PC-9 (cell line): ENCODE measurements at regions of chr19 and their contacts with region 1.

Region 1: GRCh38 chr19:5827891-5828660 is 11.4 kb downstream of the FUT6 start:
- DNase-seq: peak; percentile 75 to 94
- H3K4me3 ChIP-seq: peak overlapping the region; percentile 85
- H3K27ac ChIP-seq: peak overlapping the region; percentile 58
- H3K4me1 ChIP-seq: 0 out of 2 replicates have a peak, but pooled peaks cover 9% of the 10 kb centered on the region
- H3K27me3 ChIP-seq: no peaks in the 10 kb centered on the region
- CTCF ChIP-seq: no peak

Region 2: DNA sequence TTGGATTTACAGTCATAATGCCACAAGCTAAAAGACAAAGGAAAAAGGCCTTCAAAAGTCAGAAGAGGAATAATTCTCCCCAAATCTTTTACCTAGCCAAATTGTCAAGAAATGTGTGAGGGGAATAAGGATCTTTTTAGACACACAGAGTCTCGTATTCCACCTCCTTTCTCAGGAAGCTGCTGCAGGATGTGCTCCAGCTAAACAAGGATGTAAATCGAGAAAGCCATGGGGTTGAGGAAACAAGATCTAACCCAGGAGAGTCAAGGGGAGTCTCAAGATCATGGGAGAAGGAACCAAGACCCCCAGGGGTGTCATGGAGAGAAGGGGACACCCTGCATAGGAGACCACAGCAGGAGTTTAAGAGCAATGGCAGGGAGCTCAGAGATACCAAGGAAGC is 711.8 kb before region 1 on chr19:
- CTCF ChIA-PET with region 1: no interaction called
- POLR2A ChIA-PET with region 1: interaction called, 25 read pairs
- intact Hi-C with region 1: no loop called
- DNase-seq: no peak
- H3K4me3 ChIP-seq: no peak overlapping the region
- H3K27ac ChIP-seq: no peak overlapping the region
- H3K4me1 ChIP-seq: no peaks in the 10 kb centered on the region
- H3K27me3 ChIP-seq: no peaks in the 10 kb centered on the region
- CTCF ChIP-seq: no peak

Region 3: GRCh38 chr19:5615756-5616332 is 212.2 kb before region 1 on chr19:
- CTCF ChIA-PET with region 1: no interaction called
- POLR2A ChIA-PET with region 1: no interaction called
- intact Hi-C with region 1: no loop called
- DNase-seq: no peak
- H3K4me3 ChIP-seq: no peak overlapping the region
- H3K27ac ChIP-seq: no peak overlapping the region
- H3K4me1 ChIP-seq: peaks cover under 1% of the 10 kb centered on the region; the same call in 1 of the 2 replicates
- H3K27me3 ChIP-seq: no peaks in the 10 kb centered on the region
- CTCF ChIP-seq: no peak

Region 4: DNA sequence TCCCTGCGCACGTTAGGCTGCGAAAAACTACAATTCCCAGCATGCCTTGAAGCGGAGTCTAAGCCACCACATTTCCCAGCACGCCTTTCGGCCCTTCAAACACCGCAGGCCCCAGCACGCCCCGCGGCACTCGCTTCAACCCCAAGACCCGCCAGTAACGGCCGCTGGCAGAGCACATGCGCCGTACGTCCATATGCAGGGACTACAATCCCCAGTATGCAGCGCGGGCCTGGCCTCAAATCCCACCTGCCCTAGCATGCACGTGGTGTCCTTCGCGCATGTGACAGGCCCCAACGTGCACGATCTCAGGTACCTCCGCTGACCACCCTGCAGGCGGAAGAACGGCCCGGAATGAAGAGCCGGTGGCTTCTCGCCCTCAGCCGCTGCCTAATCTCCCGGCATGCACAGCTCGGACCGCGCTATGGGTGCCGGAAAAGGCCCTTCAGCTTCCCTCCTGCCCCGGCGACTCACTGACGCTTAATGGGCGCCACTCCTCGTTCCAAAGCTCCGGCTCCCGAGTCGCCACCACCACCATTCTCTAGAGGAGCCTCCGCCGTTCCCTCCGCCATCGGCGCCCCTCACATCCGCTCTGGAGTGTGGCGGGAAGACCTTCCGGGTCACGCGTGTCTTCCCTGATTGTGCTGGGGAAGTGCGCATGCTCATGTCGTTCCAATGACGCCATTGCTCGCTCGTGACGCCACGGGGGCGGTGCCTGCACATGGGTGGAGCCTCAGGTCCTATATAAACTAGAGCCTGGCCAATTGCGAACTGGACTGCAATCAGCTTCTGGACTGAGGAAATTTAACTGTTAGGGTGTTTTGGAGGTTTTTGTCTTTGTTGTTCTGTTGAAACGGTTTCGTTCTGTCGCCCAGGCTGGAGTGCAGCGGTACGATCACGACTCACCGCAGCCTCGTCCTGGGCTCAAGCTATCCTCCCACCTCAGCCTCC is 37.2 kb before region 1 on chr19 and contains the start of gene DUS3L:
- CTCF ChIA-PET with region 1: interaction called, 9 read pairs
- POLR2A ChIA-PET with region 1: interaction called, 24 read pairs
- intact Hi-C with region 1: no loop called
- DNase-seq: peak; percentile 87 to 90
- H3K4me3 ChIP-seq: peak within 1 kb of the TSS; percentile 86
- H3K27ac ChIP-seq: peak within 1 kb of the TSS; percentile 85
- H3K4me1 ChIP-seq: no peaks in the 10 kb centered on the region
- H3K27me3 ChIP-seq: no peaks in the 10 kb centered on the region
- CTCF ChIP-seq: no peak
- total RNA-seq, gene DUS3L: 27.1 and 29.2 TPM in 2 replicates

Region 5: GRCh38 chr19:6048808-6049405 is 220.8 kb after region 1 on chr19:
- CTCF ChIA-PET with region 1: no interaction called
- POLR2A ChIA-PET with region 1: no interaction called
- intact Hi-C with region 1: no loop called
- DNase-seq: peak; percentile 57 to 64
- H3K4me3 ChIP-seq: no peak overlapping the region
- H3K27ac ChIP-seq: no peak overlapping the region
- H3K4me1 ChIP-seq: peaks cover 4% of the 10 kb centered on the region; the same call in 1 of the 2 replicates
- H3K27me3 ChIP-seq: no peaks in the 10 kb centered on the region
- CTCF ChIP-seq: peak; percentile 78